CD8-positive, alpha-beta memory T cell (primary cell): ENCODE measurements at regions of chr19 and their contacts with region 1.

Region 1: DNA sequence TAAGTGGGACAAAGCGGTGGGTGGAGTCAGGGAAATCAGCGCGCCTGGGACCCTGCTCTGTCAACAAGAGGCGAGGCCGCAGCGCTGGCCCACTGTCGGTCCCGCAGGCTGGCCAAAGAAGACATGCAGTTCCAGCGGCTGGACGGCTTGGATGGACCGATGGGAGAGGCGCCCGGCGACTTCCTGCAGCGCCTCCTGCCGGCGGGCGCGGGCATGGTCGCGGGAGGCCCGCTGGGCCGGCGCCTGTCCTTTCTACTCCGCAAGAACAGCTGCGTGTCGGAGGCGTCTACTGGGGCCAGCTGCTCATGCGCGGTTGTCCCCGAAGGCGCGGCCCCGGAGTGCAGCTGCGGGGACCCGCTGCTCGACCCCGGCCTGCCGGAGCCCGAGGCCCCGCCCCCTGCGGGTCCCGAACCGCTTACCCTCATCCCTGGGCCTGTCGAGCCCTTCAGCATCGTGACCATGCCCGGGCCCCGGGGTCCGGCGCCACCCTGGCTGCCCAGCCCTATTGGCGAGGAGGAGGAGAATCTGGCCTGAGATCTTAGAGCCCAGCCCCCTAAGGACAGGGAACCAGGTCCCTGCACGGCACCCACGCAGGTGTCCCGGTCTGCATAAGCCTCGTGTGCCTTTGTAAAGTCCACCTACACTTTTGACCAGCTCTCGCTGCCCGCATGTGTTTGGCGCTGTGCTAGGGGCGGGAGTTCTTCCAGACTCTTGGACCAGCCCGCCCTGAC is 6.1 kb downstream of the BEST2 start:
- DNase-seq: peak; percentile 45 to 65 (median 54)
- H3K4me3 ChIP-seq: no peak overlapping the region
- H3K4me3 Mint-ChIP-seq: peak overlapping the region in 3 of 7 donors; percentile 15 to 50 (median 23)
- H3K27ac ChIP-seq: no peak overlapping the region
- H3K27ac Mint-ChIP-seq: no peak overlapping the region
- H3K4me1 ChIP-seq: peaks cover 9% of the 10 kb centered on the region
- H3K4me1 Mint-ChIP-seq: peaks cover 5 to 8% (median 8%) of the 10 kb centered on the region in 3 donors
- H3K27me3 ChIP-seq: peaks cover 4% of the 10 kb centered on the region
- H3K27me3 Mint-ChIP-seq: peaks cover 19 to 32% of the 10 kb centered on the region in 2 donors

Region 2: DNA sequence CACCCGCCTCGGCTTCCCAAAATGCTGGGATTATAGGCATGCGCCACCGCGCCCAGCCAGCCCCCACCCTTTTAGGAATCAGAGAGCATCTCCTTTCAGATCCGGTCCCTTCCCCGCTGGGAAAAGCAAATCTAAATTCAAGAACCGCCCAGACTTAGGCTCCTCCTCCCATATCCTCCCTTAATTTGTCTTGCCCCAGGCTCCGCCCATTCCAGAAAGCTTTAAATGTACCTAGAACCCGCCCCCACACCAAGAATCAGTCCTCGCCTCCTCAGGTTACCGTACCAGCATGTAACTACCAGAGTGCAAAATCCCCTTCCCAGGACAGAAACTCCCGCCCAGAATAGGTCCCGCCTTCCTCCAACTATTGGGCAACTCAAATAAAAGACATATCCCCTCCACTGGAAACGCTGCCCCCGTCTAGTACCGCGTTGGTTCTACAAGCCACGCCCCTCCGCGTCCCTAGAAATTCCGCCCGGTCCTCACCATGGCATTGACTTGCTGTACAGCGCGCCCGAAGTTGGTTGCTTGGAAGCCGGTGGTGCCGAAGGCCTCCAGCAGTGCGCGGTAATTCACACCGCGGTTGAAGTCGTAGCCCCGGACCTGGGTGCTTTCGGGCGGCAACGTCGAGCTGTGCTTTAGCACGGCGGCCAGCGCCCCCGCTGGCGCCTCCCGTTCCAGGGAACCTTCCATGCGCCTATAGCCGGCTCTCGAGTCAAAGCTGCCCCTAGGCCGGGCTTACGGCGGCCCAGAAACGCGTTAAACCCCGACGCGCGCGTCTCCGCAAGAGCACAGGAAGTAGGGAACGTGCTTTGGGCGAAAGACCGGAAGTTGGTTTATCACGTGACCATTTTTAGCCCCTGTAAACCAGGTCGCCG is 76.4 kb before region 1 on chr19 and contains the start of gene DHPS:
- CTCF ChIA-PET with region 1: interaction called, 13 read pairs
- POLR2A ChIA-PET with region 1: no interaction called
- DNase-seq: peak; percentile 84 to 96 (median 91)
- H3K4me3 ChIP-seq: peak within 1 kb of the TSS; percentile 87
- H3K4me3 Mint-ChIP-seq: peak within 1 kb of the TSS; percentile 91 to 98 (median 95)
- H3K27ac ChIP-seq: peak within 1 kb of the TSS; percentile 84
- H3K27ac Mint-ChIP-seq: peak within 1 kb of the TSS; percentile 93 to 97 (median 96)
- H3K4me1 ChIP-seq: peaks cover 14% of the 10 kb centered on the region
- H3K4me1 Mint-ChIP-seq: peaks cover 16 to 34% (median 26%) of the 10 kb centered on the region in 3 donors
- H3K27me3 ChIP-seq: no peaks in the 10 kb centered on the region
- H3K27me3 Mint-ChIP-seq: peaks cover 0 to 4% of the 10 kb centered on the region in 2 donors
- total RNA-seq, gene DHPS: 113 to 116 TPM

Region 3: DNA sequence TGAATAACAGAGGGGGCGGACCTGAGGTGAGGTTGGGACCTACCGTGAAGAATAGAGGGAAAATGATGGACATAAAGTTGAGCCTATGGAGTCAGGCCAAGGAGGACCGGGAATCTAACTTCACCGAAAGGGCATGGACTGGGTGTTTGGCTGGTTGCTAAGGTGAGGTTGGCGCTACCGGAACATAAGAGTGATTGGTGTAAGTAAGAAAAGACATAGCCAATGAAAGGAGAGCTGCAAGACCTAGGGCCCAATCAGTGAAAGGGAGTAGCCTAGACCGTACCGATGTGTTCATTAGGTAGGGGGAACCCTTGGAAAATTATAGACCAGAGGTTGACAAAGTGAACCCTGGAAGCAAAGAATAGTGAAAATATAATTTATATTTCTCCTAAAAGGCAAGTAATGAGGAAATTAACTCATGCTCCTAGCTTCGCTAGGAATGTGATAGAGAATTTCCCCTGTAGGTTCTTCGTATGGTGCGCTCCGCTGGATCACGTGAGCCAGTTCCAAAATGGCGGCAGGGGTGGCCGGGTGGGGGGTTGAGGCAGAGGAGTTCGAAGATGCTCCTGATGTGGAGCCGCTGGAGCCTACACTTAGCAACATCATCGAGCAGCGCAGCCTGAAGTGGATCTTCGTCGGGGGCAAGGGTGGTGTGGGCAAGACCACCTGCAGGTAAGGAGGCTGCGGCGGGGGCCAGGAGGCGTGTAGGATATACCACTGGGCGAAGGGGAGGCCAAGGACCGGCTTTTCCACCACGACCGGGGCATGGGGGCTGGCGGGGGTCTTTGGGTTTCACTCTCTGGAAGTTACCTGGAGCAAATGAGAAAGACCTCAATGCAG is 20.5 kb before region 1 on chr19 and contains the start of gene GET3:
- CTCF ChIA-PET with region 1: interaction called, 16 read pairs
- POLR2A ChIA-PET with region 1: no interaction called
- DNase-seq: peak; percentile 69 to 89 (median 85)
- H3K4me3 ChIP-seq: peak within 1 kb of the TSS; percentile 81
- H3K4me3 Mint-ChIP-seq: peak within 1 kb of the TSS; percentile 87 to 100 (median 99)
- H3K27ac ChIP-seq: peak within 1 kb of the TSS; percentile 95
- H3K27ac Mint-ChIP-seq: peak within 1 kb of the TSS; percentile 93 to 99 (median 97)
- H3K4me1 ChIP-seq: peaks cover 37% of the 10 kb centered on the region
- H3K4me1 Mint-ChIP-seq: peaks cover 36 to 48% (median 42%) of the 10 kb centered on the region in 3 donors
- H3K27me3 ChIP-seq: no peaks in the 10 kb centered on the region
- H3K27me3 Mint-ChIP-seq: no peaks in the 10 kb centered on the region
- total RNA-seq, gene GET3: 96.9 to 101 TPM

Region 4: GRCh38 chr19:12789904-12790619 is 32.4 kb after region 1 on chr19:
- CTCF ChIA-PET with region 1: interaction called, 326 read pairs
- POLR2A ChIA-PET with region 1: interaction called, 3 read pairs
- DNase-seq: peak; percentile 89 to 96 (median 93)
- H3K4me3 ChIP-seq: peak overlapping the region; percentile 92
- H3K4me3 Mint-ChIP-seq: peak overlapping the region; percentile 90 to 100 (median 96)
- H3K27ac ChIP-seq: peak overlapping the region; percentile 99
- H3K27ac Mint-ChIP-seq: peak overlapping the region; percentile 91 to 100 (median 99)
- H3K4me1 ChIP-seq: peaks cover 41% of the 10 kb centered on the region
- H3K4me1 Mint-ChIP-seq: peaks cover 25 to 41% (median 28%) of the 10 kb centered on the region in 3 donors
- H3K27me3 ChIP-seq: no peaks in the 10 kb centered on the region
- H3K27me3 Mint-ChIP-seq: peaks cover 0 to 30% of the 10 kb centered on the region in 2 donors

Region 5: GRCh38 chr19:12847159-12848139 is 89.7 kb after region 1 on chr19:
- CTCF ChIA-PET with region 1: interaction called, 231 read pairs
- POLR2A ChIA-PET with region 1: no interaction called
- DNase-seq: peak; percentile 73 to 84 (median 80)
- H3K4me3 ChIP-seq: no peak overlapping the region
- H3K4me3 Mint-ChIP-seq: peak overlapping the region in 5 of 7 donors; percentile 19 to 82 (median 28)
- H3K27ac ChIP-seq: no peak overlapping the region
- H3K27ac Mint-ChIP-seq: no peak overlapping the region
- H3K4me1 ChIP-seq: peaks cover 9% of the 10 kb centered on the region
- H3K4me1 Mint-ChIP-seq: peaks cover 0 to 8% (median 3%) of the 10 kb centered on the region in 3 donors
- H3K27me3 ChIP-seq: peaks cover 14% of the 10 kb centered on the region
- H3K27me3 Mint-ChIP-seq: peaks cover 23 to 48% of the 10 kb centered on the region in 2 donors